MCF 10A (cell line): ENCODE measurements at regions of chr6 and their contacts with region 1.

Region 1: GRCh38 chr6:26025894-26026832 is 61.1 kb upstream of the HFE start:
- DNase-seq: peak; percentile 96
- H3K4me3 Mint-ChIP-seq: peak overlapping the region; percentile 83
- H3K27ac Mint-ChIP-seq: peak overlapping the region; percentile 84
- H3K4me1 Mint-ChIP-seq: peaks cover 17% of the 10 kb centered on the region
- H3K27me3 Mint-ChIP-seq: no peaks in the 10 kb centered on the region
- CTCF ChIP-seq: peak; percentile 81

Region 2: GRCh38 chr6:25882051-25882496 is 144.1 kb before region 1 on chr6:
- CTCF ChIA-PET with region 1: no interaction called
- POLR2A ChIA-PET with region 1: no interaction called
- intact Hi-C with region 1: no loop called
- DNase-seq: no peak
- H3K4me3 Mint-ChIP-seq: no peak overlapping the region
- H3K27ac Mint-ChIP-seq: no peak overlapping the region
- H3K4me1 Mint-ChIP-seq: peaks cover 23% of the 10 kb centered on the region
- H3K27me3 Mint-ChIP-seq: no peaks in the 10 kb centered on the region
- CTCF ChIP-seq: no peak

Region 3: DNA sequence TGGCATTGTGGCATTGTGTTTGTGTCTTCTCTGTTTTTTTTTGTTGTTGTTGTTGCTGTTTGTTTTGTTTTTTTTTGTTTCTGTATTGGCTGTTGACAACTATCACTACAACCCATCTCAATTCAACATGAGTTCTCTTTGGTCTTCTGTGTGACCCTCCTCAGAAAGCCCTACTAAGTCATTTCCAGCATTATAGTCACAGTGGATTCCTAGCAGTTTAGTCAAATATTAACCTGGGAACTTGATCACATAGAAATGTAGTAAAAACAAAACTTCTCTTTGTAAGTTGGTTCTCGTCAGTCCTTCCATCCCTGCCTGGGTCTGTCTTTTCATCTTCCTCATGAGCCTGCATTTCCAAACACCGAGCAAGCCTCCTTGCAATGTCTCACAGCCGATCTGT is 112.4 kb before region 1 on chr6:
- CTCF ChIA-PET with region 1: no interaction called
- POLR2A ChIA-PET with region 1: no interaction called
- intact Hi-C with region 1: no loop called
- DNase-seq: no peak
- H3K4me3 Mint-ChIP-seq: no peak overlapping the region
- H3K27ac Mint-ChIP-seq: no peak overlapping the region
- H3K4me1 Mint-ChIP-seq: no peaks in the 10 kb centered on the region
- H3K27me3 Mint-ChIP-seq: no peaks in the 10 kb centered on the region
- CTCF ChIP-seq: no peak

Region 4: GRCh38 chr6:25927756-25928216 is 98.4 kb before region 1 on chr6:
- CTCF ChIA-PET with region 1: no interaction called
- POLR2A ChIA-PET with region 1: no interaction called
- intact Hi-C with region 1: no loop called
- DNase-seq: no peak
- H3K4me3 Mint-ChIP-seq: no peak overlapping the region
- H3K27ac Mint-ChIP-seq: no peak overlapping the region
- H3K4me1 Mint-ChIP-seq: no peaks in the 10 kb centered on the region
- H3K27me3 Mint-ChIP-seq: no peaks in the 10 kb centered on the region
- CTCF ChIP-seq: no peak

Region 5: DNA sequence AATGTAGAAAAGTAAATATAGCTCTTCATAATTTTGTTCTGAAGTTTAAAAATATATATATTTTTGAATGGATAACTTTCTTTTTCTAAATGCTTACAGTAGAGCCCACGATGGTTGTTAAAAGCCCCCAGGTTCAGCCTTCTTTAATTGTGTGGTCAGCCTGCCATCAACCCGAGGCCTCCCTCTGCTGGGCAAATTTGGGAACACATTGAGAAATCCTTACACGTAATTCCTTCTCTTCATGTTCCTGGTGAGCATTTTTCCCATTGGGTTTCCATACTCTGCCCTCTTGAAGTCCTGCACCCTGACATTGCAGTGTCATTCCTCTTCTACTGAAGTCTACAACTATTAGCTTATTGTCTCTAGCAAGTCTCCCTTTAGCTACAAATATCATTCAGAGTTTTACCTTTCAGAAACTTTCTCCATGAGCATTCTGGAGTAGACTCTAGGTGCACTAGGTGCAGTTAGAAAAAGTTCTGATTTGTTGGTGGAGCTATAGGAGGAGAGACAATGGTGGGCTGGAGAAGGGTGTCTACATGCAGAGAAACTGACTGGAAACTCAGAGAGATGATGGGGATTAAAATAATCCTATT is 23.0 kb before region 1 on chr6:
- CTCF ChIA-PET with region 1: interaction called, 15 read pairs
- POLR2A ChIA-PET with region 1: interaction called, 147 read pairs
- intact Hi-C with region 1: no loop called
- DNase-seq: peak; percentile 64
- H3K4me3 Mint-ChIP-seq: no peak overlapping the region
- H3K27ac Mint-ChIP-seq: no peak overlapping the region
- H3K4me1 Mint-ChIP-seq: peaks cover under 1% of the 10 kb centered on the region
- H3K27me3 Mint-ChIP-seq: no peaks in the 10 kb centered on the region
- CTCF ChIP-seq: peak; percentile 63

Region 6: GRCh38 chr6:26087284-26088115 is 61.3 kb after region 1 on chr6 and contains the start of gene HFE:
- CTCF ChIA-PET with region 1: interaction called, 4 read pairs
- POLR2A ChIA-PET with region 1: interaction called, 20 read pairs
- intact Hi-C with region 1: no loop called
- DNase-seq: peak; percentile 53
- H3K4me3 Mint-ChIP-seq: peak within 1 kb of the TSS; percentile 88
- H3K27ac Mint-ChIP-seq: peak within 1 kb of the TSS; percentile 92
- H3K4me1 Mint-ChIP-seq: peaks cover 10% of the 10 kb centered on the region
- H3K27me3 Mint-ChIP-seq: no peaks in the 10 kb centered on the region
- CTCF ChIP-seq: no peak
- total RNA-seq, gene HFE: 2.8 and 5.2 TPM in 2 replicates

Region 7: GRCh38 chr6:26183581-26184366 is 157.6 kb after region 1 on chr6:
- CTCF ChIA-PET with region 1: no interaction called
- POLR2A ChIA-PET with region 1: interaction called, 24 read pairs
- intact Hi-C with region 1: no loop called
- DNase-seq: peak; percentile 56
- H3K4me3 Mint-ChIP-seq: peak overlapping the region; percentile 79
- H3K27ac Mint-ChIP-seq: peak overlapping the region; percentile 84
- H3K4me1 Mint-ChIP-seq: peaks cover 27% of the 10 kb centered on the region
- H3K27me3 Mint-ChIP-seq: no peaks in the 10 kb centered on the region
- CTCF ChIP-seq: no peak

Region 8: GRCh38 chr6:26234421-26235296 is 208.5 kb after region 1 on chr6:
- CTCF ChIA-PET with region 1: no interaction called
- POLR2A ChIA-PET with region 1: interaction called, 18 read pairs
- intact Hi-C with region 1: no loop called
- DNase-seq: peak; percentile 90
- H3K4me3 Mint-ChIP-seq: peak overlapping the region; percentile 82
- H3K27ac Mint-ChIP-seq: peak overlapping the region; percentile 85
- H3K4me1 Mint-ChIP-seq: peaks cover 32% of the 10 kb centered on the region
- H3K27me3 Mint-ChIP-seq: no peaks in the 10 kb centered on the region
- CTCF ChIP-seq: no peak

Region 9: GRCh38 chr6:27809939-27810767 is 1784.0 kb after region 1 on chr6:
- CTCF ChIA-PET with region 1: no interaction called
- POLR2A ChIA-PET with region 1: interaction called, 58 read pairs
- intact Hi-C with region 1: loop called (anchors 10 kb)
- DNase-seq: peak; percentile 96
- H3K4me3 Mint-ChIP-seq: peak overlapping the region; percentile 86
- H3K27ac Mint-ChIP-seq: peak overlapping the region; percentile 94
- H3K4me1 Mint-ChIP-seq: peaks cover 20% of the 10 kb centered on the region
- H3K27me3 Mint-ChIP-seq: no peaks in the 10 kb centered on the region
- CTCF ChIP-seq: no peak